Naive thymus-derived CD4-positive, alpha-beta T cell (primary cell): ENCODE measurements at regions of chr3 and their contacts with region 1.

Region 1: DNA sequence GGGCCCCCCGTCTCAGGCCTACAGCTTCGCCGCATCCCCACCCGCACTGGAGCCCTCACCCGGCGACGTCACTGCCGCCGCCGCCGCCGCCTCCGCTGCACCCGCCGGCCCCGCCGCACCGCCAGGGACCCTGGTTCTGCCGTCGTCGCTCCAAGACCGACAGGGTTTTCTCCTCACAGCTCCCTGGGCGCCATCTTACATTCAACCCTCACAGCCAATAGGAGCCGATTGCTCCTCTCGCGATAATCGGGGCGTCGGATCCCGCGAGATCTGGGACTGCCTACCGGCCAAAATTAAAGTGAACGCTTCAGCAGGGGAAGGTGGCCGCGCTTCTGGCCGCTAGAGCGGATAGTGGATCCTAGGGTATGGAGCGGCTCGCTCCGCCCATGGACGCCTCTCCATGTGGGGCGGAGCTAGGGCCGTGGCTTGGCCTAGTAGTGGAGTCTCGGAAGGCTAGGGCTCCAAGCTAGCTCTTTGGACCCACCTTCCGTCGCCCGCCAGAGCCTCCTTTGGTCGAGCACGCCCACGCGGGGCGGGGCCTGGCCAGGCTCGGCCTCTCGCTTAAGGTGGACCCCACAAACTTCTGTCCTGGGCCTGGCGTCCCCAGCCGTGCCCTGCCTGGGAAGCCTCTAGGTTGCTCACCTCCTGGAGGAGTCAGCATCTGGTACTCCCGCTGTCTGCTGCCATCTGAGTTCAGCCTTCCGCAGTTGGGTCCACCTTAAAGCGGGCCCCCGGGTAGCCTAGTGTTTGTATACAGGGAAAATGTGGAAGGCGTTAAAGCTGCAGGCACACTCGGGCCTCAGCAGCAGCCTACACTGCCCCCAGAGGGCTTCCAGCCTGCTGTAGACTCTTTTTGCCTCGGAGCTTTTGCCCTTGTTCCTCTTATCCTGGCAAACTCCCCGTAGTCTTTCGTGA is at the start of gene QRICH1:
- DNase-seq: peak; percentile 93 to 98 (median 96)
- ATAC-seq: peak; percentile 86
- H3K4me3 ChIP-seq: peak within 1 kb of the TSS; percentile 100
- H3K4me3 Mint-ChIP-seq: peak within 1 kb of the TSS; percentile 85 to 99 (median 96)
- H3K27ac ChIP-seq: peak within 1 kb of the TSS; percentile 87
- H3K27ac Mint-ChIP-seq: peak within 1 kb of the TSS; percentile 88 to 99 (median 97)
- H3K4me1 ChIP-seq: peaks cover 26 to 35% of the 10 kb centered on the region in 2 donors
- H3K4me1 Mint-ChIP-seq: peaks cover 25 to 49% (median 34%) of the 10 kb centered on the region in 7 donors
- H3K27me3 ChIP-seq: no peaks in the 10 kb centered on the region
- H3K27me3 Mint-ChIP-seq: no peaks in the 10 kb centered on the region
- total RNA-seq, gene QRICH1: 146 to 192 (median 184) TPM

Region 2: GRCh38 chr3:48635222-48636021 is 458.7 kb before region 1 on chr3 and contains the start of gene SLC26A6:
- CTCF ChIA-PET with region 1: no interaction called
- POLR2A ChIA-PET with region 1: no interaction called
- intact Hi-C with region 1: loop called (anchors 1 kb)
- DNase-seq: peak; percentile 81 to 98 (median 86)
- ATAC-seq: peak; percentile 98
- H3K4me3 ChIP-seq: peak within 1 kb of the TSS; percentile 76
- H3K4me3 Mint-ChIP-seq: peak within 1 kb of the TSS; percentile 79 to 92 (median 88)
- H3K27ac ChIP-seq: peak within 1 kb of the TSS; percentile 70
- H3K27ac Mint-ChIP-seq: peak within 1 kb of the TSS in 7 of 9 donors; percentile 12 to 84 (median 68)
- H3K4me1 ChIP-seq: peaks cover 0 to 11% of the 10 kb centered on the region in 2 donors
- H3K4me1 Mint-ChIP-seq: peaks cover 4 to 31% (median 22%) of the 10 kb centered on the region in 7 donors
- H3K27me3 ChIP-seq: no peaks in the 10 kb centered on the region
- H3K27me3 Mint-ChIP-seq: no peaks in the 10 kb centered on the region
- total RNA-seq, gene SLC26A6: 15.1 to 37.6 (median 31.2) TPM

Region 3: GRCh38 chr3:48989796-48990635 is 104.1 kb before region 1 on chr3 and contains the start of gene P4HTM:
- CTCF ChIA-PET with region 1: interaction called, 4 read pairs
- POLR2A ChIA-PET with region 1: interaction called, 18 read pairs
- intact Hi-C with region 1: loop called (anchors 1 kb)
- DNase-seq: peak; percentile 36 to 83 (median 55)
- ATAC-seq: peak; percentile 68
- H3K4me3 ChIP-seq: peak within 1 kb of the TSS; percentile 96
- H3K4me3 Mint-ChIP-seq: peak within 1 kb of the TSS; percentile 89 to 97 (median 93)
- H3K27ac ChIP-seq: peak within 1 kb of the TSS; percentile 82
- H3K27ac Mint-ChIP-seq: peak within 1 kb of the TSS; percentile 87 to 95 (median 90)
- H3K4me1 ChIP-seq: peaks cover 24% of the 10 kb centered on the region in 2 donors
- H3K4me1 Mint-ChIP-seq: peaks cover 27 to 56% (median 42%) of the 10 kb centered on the region in 7 donors
- H3K27me3 ChIP-seq: no peaks in the 10 kb centered on the region
- H3K27me3 Mint-ChIP-seq: no peaks in the 10 kb centered on the region
- total RNA-seq, gene P4HTM: 37.9 to 74.7 (median 53.1) TPM

Region 4: GRCh38 chr3:49104483-49105291 is 10.6 kb after region 1 on chr3 and contains the start of gene QARS1:
- CTCF ChIA-PET with region 1: interaction called, 10 read pairs
- POLR2A ChIA-PET with region 1: interaction called, 68 read pairs
- intact Hi-C with region 1: loop called (anchors 1 kb)
- DNase-seq: peak; percentile 77 to 90 (median 87)
- ATAC-seq: peak; percentile 100
- H3K4me3 ChIP-seq: peak within 1 kb of the TSS; percentile 99
- H3K4me3 Mint-ChIP-seq: peak within 1 kb of the TSS; percentile 89 to 98 (median 96)
- H3K27ac ChIP-seq: peak within 1 kb of the TSS; percentile 94
- H3K27ac Mint-ChIP-seq: peak within 1 kb of the TSS; percentile 91 to 100 (median 98)
- H3K4me1 ChIP-seq: peaks cover 14 to 18% of the 10 kb centered on the region in 2 donors
- H3K4me1 Mint-ChIP-seq: peaks cover 16 to 41% (median 26%) of the 10 kb centered on the region in 7 donors
- H3K27me3 ChIP-seq: no peaks in the 10 kb centered on the region
- H3K27me3 Mint-ChIP-seq: no peaks in the 10 kb centered on the region
- total RNA-seq, gene QARS1: 212 to 258 (median 233) TPM

Region 5: GRCh38 chr3:49276475-49277382 is 182.6 kb after region 1 on chr3 and contains the start of gene C3orf62:
- CTCF ChIA-PET with region 1: no interaction called
- POLR2A ChIA-PET with region 1: no interaction called
- intact Hi-C with region 1: loop called in 1 of 2 experiments (anchors 5 kb)
- DNase-seq: peak; percentile 41 to 85 (median 55)
- ATAC-seq: peak; percentile 91
- H3K4me3 ChIP-seq: peak within 1 kb of the TSS; percentile 77
- H3K4me3 Mint-ChIP-seq: peak within 1 kb of the TSS; percentile 80 to 91 (median 87)
- H3K27ac ChIP-seq: peak within 1 kb of the TSS; percentile 84
- H3K27ac Mint-ChIP-seq: peak within 1 kb of the TSS; percentile 81 to 94 (median 88)
- H3K4me1 ChIP-seq: peaks cover 10% of the 10 kb centered on the region in 2 donors
- H3K4me1 Mint-ChIP-seq: peaks cover 6 to 33% (median 27%) of the 10 kb centered on the region in 7 donors
- H3K27me3 ChIP-seq: no peaks in the 10 kb centered on the region
- H3K27me3 Mint-ChIP-seq: no peaks in the 10 kb centered on the region
- total RNA-seq, gene C3orf62: 8.6 to 14.5 (median 10.9) TPM

Region 6: DNA sequence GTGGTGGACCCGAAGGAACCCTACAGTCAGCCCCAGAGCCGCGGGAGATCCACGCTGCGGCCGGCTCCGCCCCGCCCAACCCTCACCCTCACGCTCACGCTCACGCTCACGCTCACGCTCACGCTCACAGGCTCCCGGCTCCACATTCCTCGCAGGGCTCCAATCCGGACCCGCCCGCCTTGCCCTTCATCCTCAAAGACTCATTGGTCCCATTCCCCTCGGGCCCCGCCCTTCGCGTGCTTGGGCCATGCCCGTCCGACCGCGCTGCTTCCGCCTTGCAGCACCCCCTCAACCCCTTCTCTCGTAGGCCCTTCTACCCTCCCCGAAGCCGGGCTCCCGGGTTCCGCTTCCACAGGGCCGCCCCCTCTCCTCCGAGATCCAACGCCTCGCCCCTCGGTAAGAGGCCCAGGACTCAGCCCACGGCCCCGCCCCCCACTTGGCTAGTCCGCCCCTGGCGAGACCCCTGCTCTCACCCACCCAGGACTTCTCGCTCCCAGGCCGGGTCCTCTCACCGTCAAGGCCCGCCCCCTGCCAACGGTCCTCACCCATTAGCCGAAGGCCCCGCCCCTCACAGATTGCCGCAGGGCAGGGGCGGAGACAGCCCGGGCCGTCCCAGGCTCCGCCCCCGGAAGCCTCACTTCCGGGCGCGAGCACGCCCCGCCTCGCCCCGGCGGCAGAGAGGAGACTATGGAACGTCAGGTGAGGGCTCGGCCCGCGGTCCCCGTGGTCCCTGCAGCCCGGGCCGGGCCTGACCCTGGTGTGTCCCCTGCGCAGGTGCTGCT is 579.8 kb after region 1 on chr3 and contains the start of gene APEH:
- CTCF ChIA-PET with region 1: no interaction called
- POLR2A ChIA-PET with region 1: no interaction called
- intact Hi-C with region 1: loop called in 1 of 2 experiments (anchors 5 kb)
- DNase-seq: peak; percentile 94 to 99 (median 98)
- ATAC-seq: peak; percentile 93
- H3K4me3 ChIP-seq: peak within 1 kb of the TSS; percentile 79
- H3K4me3 Mint-ChIP-seq: peak within 1 kb of the TSS; percentile 90 to 97 (median 94)
- H3K27ac ChIP-seq: peak within 1 kb of the TSS; percentile 94
- H3K27ac Mint-ChIP-seq: peak within 1 kb of the TSS; percentile 93 to 99 (median 96)
- H3K4me1 ChIP-seq: peaks cover 16 to 31% of the 10 kb centered on the region in 2 donors
- H3K4me1 Mint-ChIP-seq: peaks cover 15 to 57% (median 38%) of the 10 kb centered on the region in 7 donors
- H3K27me3 ChIP-seq: no peaks in the 10 kb centered on the region
- H3K27me3 Mint-ChIP-seq: no peaks in the 10 kb centered on the region
- total RNA-seq, gene APEH: 75.5 to 151 (median 99.1) TPM